ENCODE measurements at regions of chr2 and their contacts with region 1.

Region 1: DNA sequence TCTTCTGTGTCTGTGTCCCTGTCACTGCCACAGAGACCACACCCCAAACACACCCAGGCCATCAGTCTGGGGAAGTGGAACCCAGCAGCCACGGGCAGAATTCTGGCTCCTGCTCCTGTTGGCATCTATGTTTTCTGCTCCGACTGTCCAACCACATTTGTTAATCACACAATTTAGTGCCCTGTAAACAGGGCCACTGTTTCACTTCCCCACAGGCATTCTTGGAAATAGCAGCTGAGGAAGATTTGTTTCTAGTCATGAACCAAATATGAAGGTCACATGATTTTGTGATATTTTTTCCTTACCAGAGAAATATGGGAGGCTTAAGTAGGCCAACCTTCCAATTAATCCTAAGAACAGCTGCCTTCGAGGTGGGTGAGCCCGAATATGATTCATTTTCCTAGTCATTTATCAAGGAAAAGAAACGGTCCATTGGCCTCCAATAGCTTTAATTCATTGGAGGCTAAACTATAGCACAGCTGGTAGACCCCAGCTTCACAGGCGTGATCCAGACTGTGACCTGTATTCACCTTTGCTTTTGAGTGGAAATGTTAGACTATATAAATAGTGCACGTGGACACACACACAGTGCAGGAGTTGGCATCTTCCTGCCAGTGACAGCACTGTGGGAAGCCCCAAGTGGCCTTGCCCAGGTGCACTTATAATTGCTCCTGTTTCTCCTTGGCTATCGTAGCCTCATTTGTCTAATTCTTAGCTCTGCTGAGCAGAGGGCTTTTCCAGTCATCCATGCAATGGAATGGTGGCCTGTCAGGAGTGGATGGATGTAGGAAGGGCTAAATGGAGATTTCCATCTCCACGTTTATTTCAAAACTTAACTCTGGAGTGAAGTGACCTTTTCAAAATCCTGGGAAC is 267.9 kb downstream of the LPIN1 start:
- H3K4me3 Mint-ChIP-seq: no peak overlapping the region
- H3K27ac Mint-ChIP-seq: peak overlapping the region; percentile 39
- H3K4me1 Mint-ChIP-seq: peaks cover 85% of the 10 kb centered on the region
- H3K27me3 Mint-ChIP-seq: peaks cover 13% of the 10 kb centered on the region

Region 2: DNA sequence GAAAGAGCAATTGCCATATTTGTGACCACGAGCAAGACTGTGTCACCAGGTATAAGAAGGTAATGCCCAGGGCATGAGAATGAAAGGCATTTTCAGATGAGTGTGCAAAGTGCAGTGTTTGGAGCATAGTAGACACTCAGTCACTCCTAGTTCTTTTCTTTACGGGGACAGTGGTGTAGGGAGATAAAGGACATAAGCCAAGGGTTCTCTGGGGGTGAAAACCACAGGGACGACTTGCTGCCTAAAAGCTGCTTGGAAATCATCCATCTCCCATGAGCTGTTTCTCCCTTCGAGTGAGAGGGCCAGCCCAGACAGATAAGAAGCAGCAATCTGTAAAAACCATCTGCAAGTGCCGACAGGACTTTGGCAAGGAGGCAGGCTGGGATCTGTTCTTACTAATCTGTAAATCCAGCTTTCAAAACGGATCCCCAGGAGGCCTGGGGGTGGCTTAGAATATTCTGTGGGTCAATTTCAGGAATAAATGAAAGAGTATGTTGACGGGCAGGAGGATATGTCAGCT is 46.3 kb before region 1 on chr2:
- intact Hi-C with region 1: no loop called
- H3K4me3 Mint-ChIP-seq: no peak overlapping the region
- H3K27ac Mint-ChIP-seq: no peak overlapping the region
- H3K4me1 Mint-ChIP-seq: peaks cover 5% of the 10 kb centered on the region
- H3K27me3 Mint-ChIP-seq: peaks cover 19% of the 10 kb centered on the region

Region 3: DNA sequence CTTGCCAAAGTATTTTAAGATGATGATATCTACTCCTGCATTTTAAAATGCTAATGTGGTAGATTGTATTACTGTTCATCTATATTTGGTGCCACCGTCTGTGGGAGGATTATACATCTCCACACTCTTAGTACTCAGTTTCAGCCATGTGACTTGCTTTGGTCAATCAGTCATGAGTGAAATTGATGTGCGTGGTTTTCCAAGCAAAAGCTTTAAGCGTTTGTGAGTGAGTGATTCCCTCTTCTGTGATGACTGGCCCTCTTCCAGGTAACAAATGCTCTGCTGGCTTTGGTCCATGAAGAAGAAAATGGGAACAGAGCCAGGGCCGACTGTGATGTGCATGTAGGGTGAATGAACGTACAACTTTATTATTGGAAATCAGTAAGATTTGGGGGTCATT is 62.5 kb after region 1 on chr2:
- intact Hi-C with region 1: no loop called
- H3K4me3 Mint-ChIP-seq: no peak overlapping the region
- H3K27ac Mint-ChIP-seq: no peak overlapping the region
- H3K4me1 Mint-ChIP-seq: no peaks in the 10 kb centered on the region
- H3K27me3 Mint-ChIP-seq: peaks cover 7% of the 10 kb centered on the region

Region 4: DNA sequence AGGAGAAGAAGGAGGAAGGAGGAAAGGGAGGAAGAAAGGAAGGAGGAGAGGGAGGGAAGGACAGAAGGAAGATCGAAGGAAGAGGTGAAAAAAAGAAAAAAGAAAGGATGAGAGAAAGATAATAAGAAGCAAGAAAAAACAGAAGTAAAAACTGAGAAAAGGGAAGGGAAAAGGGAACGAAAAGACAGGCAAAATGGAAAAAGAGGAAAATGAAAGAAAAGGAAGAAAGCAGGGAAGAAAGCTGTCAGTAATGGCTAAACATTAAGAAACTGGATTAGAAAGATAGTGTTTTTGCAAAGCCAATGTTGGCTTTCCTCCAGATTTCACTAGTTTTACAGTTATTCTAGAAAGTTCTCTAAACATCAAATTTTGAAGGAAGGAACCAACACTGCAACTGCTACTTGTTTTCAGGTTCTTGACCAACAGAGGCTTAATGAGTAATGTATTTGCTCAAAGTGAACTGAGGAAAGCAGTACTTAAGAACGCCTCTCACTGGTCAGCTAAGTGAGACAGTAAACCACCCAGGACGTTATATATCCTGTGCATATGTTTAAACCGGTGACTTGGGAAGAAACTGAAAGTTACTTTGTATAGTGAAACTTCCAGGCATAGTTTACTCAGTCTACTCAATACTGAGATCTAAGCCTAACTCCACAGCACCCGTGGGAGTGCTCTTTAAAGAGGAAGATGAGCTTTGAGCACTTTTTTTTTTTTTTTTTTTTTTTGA is 416.2 kb after region 1 on chr2:
- intact Hi-C with region 1: loop called (anchors 10 kb)
- H3K4me3 Mint-ChIP-seq: peak overlapping the region; percentile 65
- H3K27ac Mint-ChIP-seq: peak overlapping the region; percentile 58
- H3K4me1 Mint-ChIP-seq: peaks cover 18% of the 10 kb centered on the region
- H3K27me3 Mint-ChIP-seq: no peaks in the 10 kb centered on the region

Measured in dendritic cell treated with granulocyte-macrophage colony-stimulating factor and Interleukin-4, amounts not matched to agents 40 ng/mL and 50 ng/mL, for 4 days (primary cell).